ENCODE measurements at regions of chr3 and their contacts with region 1.

Region 1: GRCh38 chr3:125055913-125056745 is at the start of gene HEG1:
- DNase-seq: peak; percentile 83
- H3K4me3 Mint-ChIP-seq: peak within 1 kb of the TSS; percentile 88
- H3K27ac Mint-ChIP-seq: peak within 1 kb of the TSS; percentile 60
- H3K4me1 Mint-ChIP-seq: peaks cover 40% of the 10 kb centered on the region
- H3K27me3 Mint-ChIP-seq: peaks cover 6% of the 10 kb centered on the region
- total RNA-seq, gene HEG1: 6.0 to 7.9 TPM

Region 2: DNA sequence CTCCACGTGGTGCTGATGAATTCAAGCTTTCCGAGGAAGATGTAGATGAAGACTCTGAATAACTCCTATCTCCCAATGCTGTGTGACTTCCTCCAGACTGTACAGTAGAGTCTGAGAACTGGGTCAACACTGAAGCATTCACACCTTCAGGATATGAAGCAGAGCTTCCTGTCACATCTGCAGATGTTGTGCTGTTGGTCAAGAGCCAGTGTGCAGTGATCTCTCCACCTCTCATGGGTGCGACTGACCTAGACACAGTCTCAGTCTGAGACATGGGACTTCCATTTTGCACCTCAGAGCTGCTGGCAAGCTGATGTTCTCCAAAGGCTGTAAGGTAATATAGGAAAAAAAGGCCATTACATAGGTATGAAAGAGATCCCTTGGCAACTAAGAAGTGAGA is 36.9 kb before region 1 on chr3:
- CTCF ChIA-PET with region 1: no interaction called
- POLR2A ChIA-PET with region 1: no interaction called
- intact Hi-C with region 1: loop called (anchors 2 kb)
- DNase-seq: no peak
- H3K4me3 Mint-ChIP-seq: no peak overlapping the region
- H3K27ac Mint-ChIP-seq: no peak overlapping the region
- H3K4me1 Mint-ChIP-seq: peaks cover 36% of the 10 kb centered on the region
- H3K27me3 Mint-ChIP-seq: no peaks in the 10 kb centered on the region

Region 3: GRCh38 chr3:125035217-125035616 is 20.9 kb before region 1 on chr3:
- CTCF ChIA-PET with region 1: no interaction called
- POLR2A ChIA-PET with region 1: no interaction called
- intact Hi-C with region 1: loop called (anchors 1 kb)
- DNase-seq: no peak
- H3K4me3 Mint-ChIP-seq: no peak overlapping the region
- H3K27ac Mint-ChIP-seq: no peak overlapping the region
- H3K4me1 Mint-ChIP-seq: peaks cover 22% of the 10 kb centered on the region
- H3K27me3 Mint-ChIP-seq: no peaks in the 10 kb centered on the region

Region 4: GRCh38 chr3:125107861-125108567 is 51.9 kb after region 1 on chr3:
- CTCF ChIA-PET with region 1: no interaction called
- POLR2A ChIA-PET with region 1: interaction called, 4 read pairs
- intact Hi-C with region 1: loop called (anchors 5 kb)
- DNase-seq: no peak
- H3K4me3 Mint-ChIP-seq: no peak overlapping the region
- H3K27ac Mint-ChIP-seq: no peak overlapping the region
- H3K4me1 Mint-ChIP-seq: peaks cover 26% of the 10 kb centered on the region
- H3K27me3 Mint-ChIP-seq: peaks cover 23% of the 10 kb centered on the region

Region 5: DNA sequence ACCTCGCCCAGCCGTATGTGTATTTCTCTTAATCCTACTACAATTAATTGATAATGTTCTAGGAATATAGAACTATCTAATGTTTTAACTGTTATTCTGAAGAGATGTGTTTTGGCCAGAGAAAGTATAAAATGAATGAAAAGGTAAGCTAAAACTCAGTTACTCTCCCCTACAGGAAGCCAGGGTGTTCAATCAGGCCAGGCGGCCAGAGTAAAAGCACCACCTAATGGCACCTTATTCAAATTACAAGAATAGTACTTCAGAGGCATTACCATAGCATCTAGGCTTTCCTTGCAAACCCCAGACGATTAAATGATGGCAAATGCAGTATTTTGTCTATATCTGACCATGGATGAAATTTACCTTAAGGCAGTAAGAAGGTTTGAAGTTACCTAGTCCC is 146.1 kb after region 1 on chr3:
- CTCF ChIA-PET with region 1: no interaction called
- POLR2A ChIA-PET with region 1: no interaction called
- intact Hi-C with region 1: loop called (anchors 10 kb)
- DNase-seq: peak; percentile 24
- H3K4me3 Mint-ChIP-seq: no peak overlapping the region
- H3K27ac Mint-ChIP-seq: no peak overlapping the region
- H3K4me1 Mint-ChIP-seq: peaks cover 6% of the 10 kb centered on the region
- H3K27me3 Mint-ChIP-seq: peaks cover 12% of the 10 kb centered on the region